Tibial artery (tissue), 4 donors: ENCODE measurements at regions of chr20 and their contacts with region 1.

Region 1: DNA sequence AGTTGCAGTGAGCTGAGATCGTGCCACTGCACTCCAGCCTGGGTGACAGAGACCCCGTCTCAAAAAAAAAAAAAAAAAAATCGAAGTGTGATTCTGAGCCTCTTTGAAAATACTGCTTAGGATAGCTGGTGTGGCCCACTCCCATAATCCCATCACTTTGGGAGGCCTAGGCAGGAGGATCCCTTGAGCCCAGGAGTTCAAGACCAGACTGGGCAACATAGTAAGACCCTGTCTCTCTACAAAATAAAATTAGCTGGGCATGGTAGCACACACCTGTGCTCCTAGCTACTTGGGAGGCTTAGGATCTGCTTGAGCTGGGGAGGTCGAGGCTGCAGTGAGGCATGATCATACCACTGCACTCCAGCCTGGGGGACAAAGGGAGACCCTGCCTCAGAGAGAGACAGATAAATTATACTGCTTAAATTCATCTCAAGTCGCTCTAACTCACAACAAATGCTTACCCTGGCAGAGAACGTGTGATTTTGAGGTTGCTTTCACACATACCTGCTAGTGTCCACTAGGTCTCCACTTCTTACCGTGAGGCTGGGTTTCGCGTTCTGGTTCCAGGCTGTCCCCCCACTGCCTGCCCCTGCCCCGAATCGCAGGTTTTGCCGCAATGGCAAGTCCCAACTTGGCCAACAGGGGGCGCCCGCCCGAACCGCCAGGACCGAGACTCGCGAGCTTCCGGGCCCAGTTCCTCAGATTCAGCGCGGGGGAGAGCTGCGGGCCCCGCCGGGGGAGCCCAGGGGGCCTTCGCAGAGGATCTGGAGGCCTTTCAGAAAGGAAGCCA is 12.3 kb upstream of the TMC2 start:
- DNase-seq: peak; percentile 75 to 92
- H3K4me3 ChIP-seq: peak overlapping the region; percentile 63 to 85
- H3K27ac ChIP-seq: peak overlapping the region; percentile 82 to 93
- H3K4me1 ChIP-seq: peaks cover 0 to 7% (median 4%) of the 10 kb centered on the region in 4 donors
- H3K27me3 ChIP-seq: no peaks in the 10 kb centered on the region
- CTCF ChIP-seq: peak; percentile 91 to 94

Region 2: GRCh38 chr20:2403291-2404052 is 120.6 kb before region 1 on chr20:
- intact Hi-C with region 1: no loop called
- DNase-seq: no peak
- H3K4me3 ChIP-seq: no peak overlapping the region
- H3K27ac ChIP-seq: no peak overlapping the region
- H3K4me1 ChIP-seq: no peaks in the 10 kb centered on the region
- H3K27me3 ChIP-seq: no peaks in the 10 kb centered on the region
- CTCF ChIP-seq: no peak

Region 3: DNA sequence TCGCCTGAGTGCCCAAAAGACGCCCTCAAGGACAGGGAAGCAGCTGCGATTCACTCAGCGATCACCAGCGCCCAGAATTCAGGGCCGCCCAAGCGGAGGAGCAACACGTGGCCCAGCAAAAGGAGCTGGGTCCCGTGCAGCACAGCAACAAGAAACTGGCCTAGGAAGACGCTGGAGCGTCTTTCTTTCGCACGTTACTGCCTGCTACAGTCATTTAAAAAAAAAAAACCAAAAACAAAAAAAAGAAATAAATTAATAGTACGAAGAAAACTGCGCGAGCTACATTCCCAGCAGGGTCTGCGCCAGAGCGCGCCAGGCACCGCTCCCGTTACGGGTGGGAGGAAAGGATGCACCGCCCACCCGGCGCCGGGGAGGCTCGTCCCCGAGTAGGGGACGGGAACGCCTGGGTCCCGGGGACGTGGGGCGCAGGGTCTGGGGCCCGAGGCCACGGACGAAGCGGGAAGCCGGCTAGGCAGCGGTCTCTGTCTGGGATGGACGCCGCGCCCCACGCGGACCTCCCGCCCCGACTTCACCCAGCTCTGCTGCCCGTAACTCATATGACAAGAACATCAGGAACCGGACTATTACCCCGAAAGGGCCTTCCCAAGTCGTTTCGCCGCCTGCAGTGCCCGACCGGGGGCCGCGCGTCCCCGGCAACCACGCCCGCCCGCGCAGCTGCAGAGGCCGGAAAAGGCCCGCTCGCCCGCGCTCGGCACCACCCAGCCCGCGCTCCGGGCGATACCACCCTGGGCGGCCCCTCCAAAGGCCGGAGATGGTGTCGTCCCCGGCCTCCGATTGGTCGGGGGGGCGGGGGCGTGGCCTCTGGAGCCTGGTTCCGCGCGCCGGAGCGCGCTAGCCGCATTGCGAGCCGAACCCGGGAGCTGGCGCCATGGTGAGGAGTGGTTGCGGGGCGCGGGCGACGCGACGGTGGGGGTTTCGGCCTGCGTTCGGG is 127.9 kb after region 1 on chr20 and contains the start of gene NOP56:
- intact Hi-C with region 1: loop called (anchors 10 kb)
- DNase-seq: peak; percentile 85 to 94
- H3K4me3 ChIP-seq: peak within 1 kb of the TSS; percentile 66 to 84
- H3K27ac ChIP-seq: peak within 1 kb of the TSS; percentile 82 to 89
- H3K4me1 ChIP-seq: peaks cover 0 to 21% (median 13%) of the 10 kb centered on the region in 4 donors
- H3K27me3 ChIP-seq: no peaks in the 10 kb centered on the region
- CTCF ChIP-seq: no peak